Aorta (tissue), 5 donors: ENCODE measurements at regions of chr18 and their contacts with region 1.

Region 1: DNA sequence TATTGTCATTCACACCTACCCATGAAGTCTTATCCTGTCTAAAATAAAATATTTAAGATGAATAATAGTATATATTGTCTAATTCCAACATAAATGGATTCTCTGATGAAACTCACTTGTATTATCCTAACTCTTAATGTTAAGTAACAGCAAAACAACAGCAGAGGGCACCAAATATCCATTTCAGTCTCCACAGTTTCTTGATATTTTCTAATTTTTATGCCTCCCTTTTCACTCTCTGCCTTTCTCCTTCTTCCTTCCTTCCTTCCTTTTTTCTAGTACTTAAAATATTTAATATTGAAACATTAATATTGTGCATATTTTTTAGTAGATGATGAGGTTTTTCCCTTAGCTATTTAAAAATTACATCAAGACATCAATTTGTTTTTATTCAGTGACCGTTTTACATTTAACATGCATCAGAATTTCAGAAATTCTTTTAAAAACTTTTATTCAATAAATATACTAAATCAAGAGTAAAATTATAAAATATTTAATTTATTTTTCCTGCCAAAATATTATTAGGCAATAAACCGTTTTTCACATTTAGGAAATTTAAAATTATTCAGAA is 97.6 kb downstream of the WDR7 start:
- DNase-seq: no peak
- ATAC-seq: no peak
- H3K4me3 ChIP-seq: no peak overlapping the region
- H3K27ac ChIP-seq: no peak overlapping the region
- H3K4me1 ChIP-seq: no peaks in the 10 kb centered on the region
- H3K27me3 ChIP-seq: no peaks in the 10 kb centered on the region

Region 2: DNA sequence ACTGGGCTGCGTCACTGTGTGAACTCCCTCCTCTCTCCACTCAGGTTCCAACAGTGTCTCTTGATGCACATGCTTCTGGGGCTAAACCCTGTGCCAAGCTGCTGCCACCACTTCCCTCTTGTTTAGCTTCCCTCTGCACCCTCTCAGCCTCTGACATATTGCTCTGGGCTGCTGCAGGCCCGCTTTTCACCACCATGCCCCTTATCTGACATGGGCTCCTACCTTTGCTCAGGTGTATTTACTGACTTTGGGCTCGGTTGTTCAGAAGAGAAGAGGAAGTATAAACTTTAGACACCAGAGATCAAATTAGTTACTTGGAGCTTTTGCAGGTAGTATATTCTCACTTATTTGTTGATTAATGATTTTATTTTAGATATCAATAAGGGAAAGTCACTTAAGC is 20.0 kb before region 1 on chr18:
- intact Hi-C with region 1: no loop called
- DNase-seq: no peak
- ATAC-seq: no peak
- H3K4me3 ChIP-seq: no peak overlapping the region
- H3K27ac ChIP-seq: no peak overlapping the region
- H3K4me1 ChIP-seq: no peaks in the 10 kb centered on the region
- H3K27me3 ChIP-seq: no peaks in the 10 kb centered on the region

Region 3: DNA sequence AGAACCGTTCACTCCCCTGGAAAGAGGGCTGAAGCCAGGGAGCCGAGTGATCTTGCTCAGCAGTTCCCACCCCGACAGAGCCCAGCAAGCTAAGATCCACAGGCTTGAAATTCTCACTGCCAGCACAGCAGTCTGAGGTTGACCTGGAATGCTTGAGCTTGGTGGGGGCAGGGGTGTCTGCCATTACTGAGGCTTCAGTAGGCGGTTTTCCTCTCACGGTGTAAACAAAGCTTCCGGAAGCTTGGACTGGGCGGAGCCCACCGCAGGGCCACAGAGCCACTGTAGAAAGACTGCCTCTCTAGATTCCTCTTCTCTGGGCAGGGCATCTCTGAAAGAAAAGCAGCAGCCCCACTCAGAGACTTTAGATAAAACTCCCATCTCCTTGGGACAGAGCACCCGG is 83.2 kb after region 1 on chr18:
- intact Hi-C with region 1: no loop called
- DNase-seq: no peak
- ATAC-seq: no peak
- H3K4me3 ChIP-seq: no peak overlapping the region
- H3K27ac ChIP-seq: no peak overlapping the region
- H3K4me1 ChIP-seq: no peaks in the 10 kb centered on the region
- H3K27me3 ChIP-seq: no peaks in the 10 kb centered on the region

Region 4: GRCh38 chr18:56921896-56922480 is 173.2 kb after region 1 on chr18:
- intact Hi-C with region 1: no loop called
- DNase-seq: no peak
- ATAC-seq: no peak
- H3K4me3 ChIP-seq: no peak overlapping the region
- H3K27ac ChIP-seq: no peak overlapping the region
- H3K4me1 ChIP-seq: no peaks in the 10 kb centered on the region
- H3K27me3 ChIP-seq: no peaks in the 10 kb centered on the region

Region 5: GRCh38 chr18:57446322-57446721 is 697.5 kb after region 1 on chr18:
- intact Hi-C with region 1: loop called in 1 of 2 experiments (anchors 10 kb)
- DNase-seq: no peak
- ATAC-seq: no peak
- H3K4me3 ChIP-seq: no peak overlapping the region
- H3K27ac ChIP-seq: no peak overlapping the region
- H3K4me1 ChIP-seq: no peaks in the 10 kb centered on the region
- H3K27me3 ChIP-seq: peaks cover 0 to 2% of the 10 kb centered on the region in 2 donors

Region 6: DNA sequence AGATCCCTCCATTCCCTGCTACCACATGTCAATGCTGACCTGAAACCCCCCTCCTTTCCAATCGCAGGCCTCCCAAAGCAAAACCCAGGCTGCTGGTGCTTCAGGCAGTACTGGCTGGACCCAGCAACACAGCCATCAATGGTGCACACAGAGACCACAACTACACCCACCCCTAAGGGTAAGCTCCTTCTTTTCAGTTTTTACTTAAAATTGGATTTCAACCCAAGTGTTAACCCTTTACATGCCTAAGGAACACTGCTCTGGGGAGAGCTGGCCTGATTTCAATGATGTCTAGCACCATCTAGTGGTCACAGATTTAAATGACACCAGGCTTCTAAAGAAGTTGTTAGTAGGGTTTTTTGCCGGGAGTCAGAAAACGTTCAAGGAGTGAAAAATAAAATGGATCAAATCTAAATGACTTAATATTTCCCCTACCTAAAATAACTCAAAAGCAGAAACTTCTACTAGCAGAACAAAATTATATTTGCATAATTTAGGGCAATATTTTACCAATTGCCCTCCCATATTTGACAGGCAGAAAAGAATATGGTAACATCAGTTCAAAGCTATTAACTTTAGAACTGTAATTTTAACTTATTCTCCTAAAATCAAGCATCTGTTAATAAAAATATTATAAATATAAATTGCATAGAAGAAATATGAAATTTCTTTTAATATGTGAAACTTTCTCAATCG is 813.1 kb after region 1 on chr18:
- intact Hi-C with region 1: loop called in 1 of 2 experiments (anchors 5 kb)
- DNase-seq: no peak
- ATAC-seq: peak; percentile 54
- H3K4me3 ChIP-seq: no peak overlapping the region
- H3K27ac ChIP-seq: no peak overlapping the region
- H3K4me1 ChIP-seq: no peaks in the 10 kb centered on the region
- H3K27me3 ChIP-seq: no peaks in the 10 kb centered on the region